Breast epithelium (tissue), 4 donors: ENCODE measurements at regions of chr10 and their contacts with region 1.

Region 1: DNA sequence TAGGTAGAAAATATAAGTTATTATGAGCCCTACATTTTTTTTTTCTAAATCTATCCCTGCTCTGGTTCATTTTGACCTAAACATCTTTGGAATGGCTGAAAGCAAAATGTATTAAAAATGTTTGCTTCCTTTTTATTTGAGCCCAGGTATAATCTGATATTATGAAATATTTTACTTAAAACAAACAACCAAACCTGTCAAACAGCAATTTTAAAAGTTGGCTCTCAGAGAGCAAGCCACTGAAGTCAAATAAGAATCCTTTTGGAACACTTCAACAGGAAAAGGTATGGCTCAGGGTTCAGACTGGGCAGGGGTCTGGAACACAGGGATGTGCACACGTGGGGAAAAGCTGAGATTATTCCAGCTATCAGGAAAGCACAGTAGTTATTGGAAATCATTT is 782.9 kb downstream of the CCSER2 start:
- DNase-seq: no peak
- H3K4me3 ChIP-seq: no peak overlapping the region
- H3K27ac ChIP-seq: no peak overlapping the region
- H3K4me1 ChIP-seq: no peaks in the 10 kb centered on the region
- H3K27me3 ChIP-seq: no peaks in the 10 kb centered on the region
- CTCF ChIP-seq: no peak
- POLR2A ChIP-seq: no peak

Region 2: GRCh38 chr10:85047170-85047834 is 64.0 kb before region 1 on chr10:
- intact Hi-C with region 1: loop called (anchors 2 kb)
- DNase-seq: no peak
- H3K4me3 ChIP-seq: no peak overlapping the region
- H3K27ac ChIP-seq: no peak overlapping the region
- H3K4me1 ChIP-seq: no peaks in the 10 kb centered on the region
- H3K27me3 ChIP-seq: no peaks in the 10 kb centered on the region
- CTCF ChIP-seq: no peak
- POLR2A ChIP-seq: no peak

Region 3: DNA sequence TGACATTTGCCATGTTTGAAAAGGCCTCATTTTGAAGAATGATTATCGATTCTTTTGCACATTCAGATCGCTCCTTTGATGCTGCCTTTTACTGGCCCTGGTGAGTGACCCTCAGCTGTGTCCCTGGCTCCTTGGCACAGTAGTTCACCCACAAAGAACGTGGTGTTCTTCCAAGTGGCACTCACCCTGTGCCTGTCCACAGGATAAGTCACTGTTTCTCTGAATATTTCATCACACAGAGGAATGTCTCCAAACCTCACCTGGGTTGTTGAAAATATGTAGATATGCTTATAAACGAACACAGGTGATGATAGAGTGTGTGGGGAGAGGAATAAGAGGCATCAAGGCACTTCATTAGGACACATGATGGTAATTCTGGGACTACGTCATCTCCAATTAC is 27.9 kb after region 1 on chr10:
- intact Hi-C with region 1: no loop called
- DNase-seq: peak in 1 of 2 donors; percentile 70
- H3K4me3 ChIP-seq: no peak overlapping the region
- H3K27ac ChIP-seq: peak overlapping the region in 1 of 2 donors; percentile 19
- H3K4me1 ChIP-seq: no peaks in the 10 kb centered on the region
- H3K27me3 ChIP-seq: no peaks in the 10 kb centered on the region
- CTCF ChIP-seq: no peak
- POLR2A ChIP-seq: no peak